Panc1 (cell line): ENCODE measurements at regions of chr14 and their contacts with region 1.

Region 1: GRCh38 chr14:105839425-105840265 is 313.3 kb downstream of the TMEM121 start:
- DNase-seq: no peak
- ATAC-seq: no peak
- H3K4me3 ChIP-seq: no peak overlapping the region
- H3K27ac ChIP-seq: no peak overlapping the region
- H3K4me1 ChIP-seq: no peaks in the 10 kb centered on the region
- H3K27me3 ChIP-seq: no peaks in the 10 kb centered on the region
- CTCF ChIP-seq: no peak

Region 2: GRCh38 chr14:106372870-106373652 is 533.4 kb after region 1 on chr14:
- CTCF ChIA-PET with region 1: no interaction called
- POLR2A ChIA-PET with region 1: no interaction called
- in situ Hi-C with region 1: no loop called
- intact Hi-C with region 1: loop called (anchors 10 kb)
- DNase-seq: peak; percentile 17
- ATAC-seq: peak; percentile 74
- H3K4me3 ChIP-seq: no peak overlapping the region
- H3K27ac ChIP-seq: no peak overlapping the region
- H3K4me1 ChIP-seq: no peaks in the 10 kb centered on the region
- H3K27me3 ChIP-seq: no peaks in the 10 kb centered on the region; the same call in 1 of the 2 replicates
- CTCF ChIP-seq: peak; percentile 86